ENCODE measurements at regions of chr21 and their contacts with region 1.

Region 1: GRCh38 chr21:29073222-29074006 is at the start of gene CCT8:
- DNase-seq: peak; percentile 99
- ATAC-seq: peak; percentile 98
- total RNA-seq, gene CCT8: 108 TPM

Region 2: GRCh38 chr21:29034678-29035077 is 38.7 kb before region 1 on chr21:
- intact Hi-C with region 1: loop called (anchors 5 kb)
- DNase-seq: no peak
- ATAC-seq: no peak

Measured in Right ventricle myocardium superior (tissue), 1 donor.